Posterior vena cava (tissue), 2 donors: ENCODE measurements at regions of chr20 and their contacts with region 1.

Region 1: GRCh38 chr20:17542993-17543412 is 11.8 kb upstream of the BFSP1 start:
- DNase-seq: no peak

Region 2: GRCh38 chr20:16476032-16476431 is 1067.0 kb before region 1 on chr20:
- intact Hi-C with region 1: no loop called
- DNase-seq: no peak

Region 3: GRCh38 chr20:17226410-17227218 is 316.4 kb before region 1 on chr20 and contains the start of gene PCSK2:
- intact Hi-C with region 1: no loop called
- DNase-seq: peak; percentile 78
- total RNA-seq, gene PCSK2: 0.24 to 0.32 TPM

Region 4: GRCh38 chr20:17579369-17580039 is 36.5 kb after region 1 on chr20:
- intact Hi-C with region 1: loop called (anchors 5 kb)
- DNase-seq: no peak

Region 5: GRCh38 chr20:17595518-17596255 is 52.7 kb after region 1 on chr20:
- intact Hi-C with region 1: loop called in 1 of 2 experiments (anchors 5 kb)
- DNase-seq: no peak

Region 6: DNA sequence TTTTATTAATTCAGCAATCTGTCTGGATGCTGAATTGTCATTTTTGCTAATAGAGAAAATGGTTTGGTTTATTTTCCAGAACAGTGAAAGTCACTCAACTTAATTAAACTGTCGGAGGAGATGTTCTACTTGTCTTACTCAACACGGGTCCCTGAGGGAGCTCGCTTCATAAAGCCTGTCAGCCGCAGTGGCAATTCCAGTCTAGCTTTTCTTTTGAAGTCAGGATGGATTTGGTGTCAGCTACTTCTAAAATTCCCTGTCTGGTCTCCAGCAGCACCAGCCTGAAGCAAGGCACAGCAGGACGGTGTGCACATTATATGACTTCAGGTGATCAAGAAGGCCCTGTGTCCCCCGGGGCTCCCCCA is 1930.9 kb after region 1 on chr20:
- intact Hi-C with region 1: no loop called
- DNase-seq: no peak